Activated CD4-positive, alpha-beta T cell treated with anti-CD3 and anti-CD28 coated beads for 36 hours (primary cell): ENCODE measurements at regions of chr7 and their contacts with region 1.

Region 1: GRCh38 chr7:135662373-135663114 is at the start of gene STMP1:
- DNase-seq: peak; percentile 99
- ATAC-seq: peak; percentile 82
- H3K4me3 Mint-ChIP-seq: peak within 1 kb of the TSS; percentile 96
- H3K27ac Mint-ChIP-seq: peak within 1 kb of the TSS; percentile 91
- H3K4me1 Mint-ChIP-seq: peaks cover 44% of the 10 kb centered on the region
- H3K27me3 Mint-ChIP-seq: no peaks in the 10 kb centered on the region
- total RNA-seq, gene STMP1: 18.7 to 20.7 TPM

Region 2: DNA sequence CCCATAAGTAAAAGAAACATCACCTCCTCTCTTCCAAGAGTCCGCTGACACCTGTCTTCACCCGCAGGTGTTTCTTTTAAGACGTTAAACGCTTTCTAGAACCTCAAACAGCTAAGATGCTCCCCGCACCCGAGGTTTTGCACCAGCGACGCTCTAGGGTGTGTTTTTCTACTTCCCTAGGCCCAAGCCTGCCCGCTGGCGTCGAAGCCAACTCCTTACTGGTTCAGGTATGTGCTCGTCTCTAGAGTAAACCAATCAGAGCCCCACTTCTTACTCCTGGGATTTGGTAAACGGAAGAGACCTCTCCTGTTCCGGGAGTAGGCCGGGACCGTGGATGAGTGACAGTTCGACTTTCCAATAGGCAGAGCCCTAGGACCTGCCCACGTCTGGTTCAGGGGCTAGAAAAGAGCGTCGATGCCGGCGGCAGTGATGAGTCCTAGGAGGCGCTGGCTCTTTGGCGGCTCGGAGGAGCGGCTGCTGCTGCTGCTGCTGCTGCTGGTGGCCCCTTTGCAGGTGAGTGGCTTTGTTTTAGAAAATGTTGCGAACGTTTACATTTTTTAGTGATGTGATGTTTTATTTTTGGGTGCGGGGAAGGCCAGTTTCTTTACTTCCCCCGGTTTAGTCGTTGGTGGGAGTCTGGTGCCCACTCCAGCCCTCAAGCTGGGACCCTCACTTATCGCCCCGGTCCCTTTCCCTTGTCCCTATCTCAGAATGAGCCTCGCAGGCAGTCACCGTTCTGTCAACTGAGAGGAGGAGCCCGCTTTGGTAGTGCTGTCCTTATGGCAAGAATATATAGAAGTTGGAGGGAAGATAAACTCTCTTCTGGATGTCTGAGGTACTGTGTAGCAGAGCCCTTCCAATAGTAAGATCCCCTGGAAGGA is 1015.9 kb before region 1 on chr7 and contains the start of gene BPGM:
- CTCF ChIA-PET with region 1: no interaction called
- POLR2A ChIA-PET with region 1: interaction called, 4 read pairs
- intact Hi-C with region 1: loop called in 1 of 2 experiments (anchors 2 kb)
- DNase-seq: peak; percentile 97
- ATAC-seq: peak; percentile 99
- H3K4me3 Mint-ChIP-seq: no peak within 1 kb of the TSS
- H3K27ac Mint-ChIP-seq: no peak within 1 kb of the TSS
- H3K4me1 Mint-ChIP-seq: peaks cover 44% of the 10 kb centered on the region
- H3K27me3 Mint-ChIP-seq: no peaks in the 10 kb centered on the region
- total RNA-seq, gene BPGM: 17.5 to 18.6 TPM

Region 3: DNA sequence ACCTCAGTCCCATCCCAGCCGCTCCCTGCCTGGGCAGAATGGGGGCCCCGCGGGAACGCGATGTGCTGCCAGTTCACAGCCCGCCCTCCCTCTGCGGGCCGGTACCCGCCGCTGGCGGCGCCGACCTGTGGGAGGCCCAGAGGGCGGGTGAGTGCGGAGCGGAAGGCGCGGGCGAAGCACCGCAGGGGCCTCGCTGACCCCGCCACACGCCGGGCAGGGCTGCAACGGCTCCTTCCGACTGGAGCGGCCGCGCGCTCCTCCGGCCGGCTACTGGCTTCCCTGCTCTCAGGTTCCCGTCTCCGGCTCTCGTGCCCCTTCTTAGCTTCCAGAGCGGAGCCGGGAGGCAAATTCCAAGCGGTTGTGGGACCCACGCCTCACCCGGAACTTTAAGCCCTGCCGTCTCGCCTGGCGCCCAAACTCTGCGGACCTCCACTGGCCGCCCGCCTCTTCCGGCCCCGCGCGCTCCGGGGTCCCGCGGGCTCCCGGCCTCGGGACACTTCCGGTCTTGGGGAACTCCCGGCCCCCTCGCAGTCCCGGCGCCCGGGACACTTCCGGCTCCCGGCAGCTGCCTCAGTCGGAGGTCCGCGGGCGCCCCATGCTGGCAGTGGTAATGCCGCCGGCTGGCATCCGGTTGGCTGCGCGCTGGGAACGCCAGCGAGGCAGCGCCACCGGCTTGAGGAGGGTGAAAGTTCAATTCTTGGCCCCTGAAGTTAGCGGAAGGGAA is 492.1 kb before region 1 on chr7 and contains the start of gene CYREN:
- CTCF ChIA-PET with region 1: no interaction called
- POLR2A ChIA-PET with region 1: no interaction called
- intact Hi-C with region 1: loop called in 1 of 2 experiments (anchors 1 kb)
- DNase-seq: peak; percentile 97
- ATAC-seq: peak; percentile 85
- H3K4me3 Mint-ChIP-seq: peak within 1 kb of the TSS; percentile 88
- H3K27ac Mint-ChIP-seq: peak within 1 kb of the TSS; percentile 96
- H3K4me1 Mint-ChIP-seq: peaks cover 50% of the 10 kb centered on the region
- H3K27me3 Mint-ChIP-seq: no peaks in the 10 kb centered on the region
- total RNA-seq, gene CYREN: 32.6 to 40.5 TPM

Region 4: GRCh38 chr7:135281363-135281949 is 381.1 kb before region 1 on chr7:
- CTCF ChIA-PET with region 1: interaction called, 3 read pairs
- POLR2A ChIA-PET with region 1: no interaction called
- intact Hi-C with region 1: loop called in 1 of 2 experiments (anchors 5 kb)
- DNase-seq: peak; percentile 89
- ATAC-seq: peak; percentile 99
- H3K4me3 Mint-ChIP-seq: no peak overlapping the region
- H3K27ac Mint-ChIP-seq: no peak overlapping the region
- H3K4me1 Mint-ChIP-seq: peaks cover 15% of the 10 kb centered on the region
- H3K27me3 Mint-ChIP-seq: peaks cover 9% of the 10 kb centered on the region

Region 5: GRCh38 chr7:135558337-135558767 is 104.2 kb before region 1 on chr7:
- CTCF ChIA-PET with region 1: no interaction called
- POLR2A ChIA-PET with region 1: interaction called, 6 read pairs
- intact Hi-C with region 1: loop called (anchors 1 kb)
- DNase-seq: peak; percentile 78
- ATAC-seq: peak; percentile 73
- H3K4me3 Mint-ChIP-seq: no peak overlapping the region
- H3K27ac Mint-ChIP-seq: no peak overlapping the region
- H3K4me1 Mint-ChIP-seq: peaks cover 29% of the 10 kb centered on the region
- H3K27me3 Mint-ChIP-seq: no peaks in the 10 kb centered on the region

Region 6: GRCh38 chr7:135692055-135692454 is 29.5 kb after region 1 on chr7:
- CTCF ChIA-PET with region 1: no interaction called
- POLR2A ChIA-PET with region 1: no interaction called
- intact Hi-C with region 1: no loop called
- DNase-seq: no peak
- ATAC-seq: no peak
- H3K4me3 Mint-ChIP-seq: no peak overlapping the region
- H3K27ac Mint-ChIP-seq: no peak overlapping the region
- H3K4me1 Mint-ChIP-seq: no peaks in the 10 kb centered on the region
- H3K27me3 Mint-ChIP-seq: no peaks in the 10 kb centered on the region

Region 7: DNA sequence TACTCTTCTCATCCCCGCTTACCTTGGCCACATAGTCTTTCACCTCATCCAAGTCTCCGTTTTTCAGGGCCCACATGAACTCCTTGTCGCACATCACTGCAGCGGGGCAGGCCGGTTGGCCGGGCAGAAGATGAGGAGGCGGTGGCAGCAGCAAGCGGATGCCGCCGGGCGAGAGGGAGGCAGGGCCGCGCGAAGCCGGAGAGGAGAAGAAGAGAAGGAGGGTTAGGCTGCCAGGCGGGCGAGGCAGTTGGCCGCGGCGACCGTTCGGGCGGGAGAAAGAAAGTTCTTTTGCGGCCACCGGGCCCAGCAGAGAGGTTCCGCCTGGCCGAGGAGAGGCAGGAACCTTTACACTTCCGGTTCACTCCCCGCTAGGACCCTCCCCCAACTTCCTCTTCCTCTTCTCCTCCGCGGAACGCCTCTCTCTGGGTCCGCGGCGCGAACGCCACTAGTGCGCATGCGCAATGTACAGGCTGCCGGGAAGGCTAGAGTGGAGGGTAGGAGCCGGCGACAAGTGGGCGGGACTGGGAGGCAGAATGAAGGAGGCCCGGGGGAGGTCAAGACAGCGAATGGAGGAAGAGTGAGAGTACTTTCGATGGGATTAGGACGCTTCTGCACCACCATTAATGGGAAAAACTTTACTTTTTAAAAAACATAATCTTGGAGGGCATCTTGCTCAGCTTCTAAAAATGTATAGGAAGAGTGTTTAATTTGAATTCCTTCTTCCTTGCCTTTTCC is 314.6 kb after region 1 on chr7 and contains the start of gene MTPN:
- CTCF ChIA-PET with region 1: no interaction called
- POLR2A ChIA-PET with region 1: interaction called, 7 read pairs
- intact Hi-C with region 1: loop called (anchors 1 kb)
- DNase-seq: peak; percentile 98
- ATAC-seq: peak; percentile 87
- H3K4me3 Mint-ChIP-seq: peak within 1 kb of the TSS; percentile 99
- H3K27ac Mint-ChIP-seq: peak within 1 kb of the TSS; percentile 97
- H3K4me1 Mint-ChIP-seq: peaks cover 73% of the 10 kb centered on the region
- H3K27me3 Mint-ChIP-seq: no peaks in the 10 kb centered on the region
- total RNA-seq, gene MTPN: 123 to 136 TPM

Region 8: GRCh38 chr7:136016649-136017395 is 354.3 kb after region 1 on chr7:
- CTCF ChIA-PET with region 1: no interaction called
- POLR2A ChIA-PET with region 1: no interaction called
- intact Hi-C with region 1: loop called in 1 of 2 experiments (anchors 5 kb)
- DNase-seq: peak; percentile 15
- ATAC-seq: peak; percentile 92
- H3K4me3 Mint-ChIP-seq: no peak overlapping the region
- H3K27ac Mint-ChIP-seq: peak overlapping the region; percentile 21
- H3K4me1 Mint-ChIP-seq: peaks cover 21% of the 10 kb centered on the region
- H3K27me3 Mint-ChIP-seq: peaks cover 20% of the 10 kb centered on the region